Activated T-helper 2 cell treated with anti-CD3 and anti-CD28 coated beads, Interferon-gamma antibody, Interleukin-2, Interleukin-4, amounts not matched to agents 10 μg/mL and 5 μg/mL and 100 μg/mL, durations not matched to agents 14 hours and 24 hours and 36 hours (primary cell): ENCODE measurements at regions of chr3 and their contacts with region 1.

Region 1: GRCh38 chr3:58034738-58035523 is 26.7 kb downstream of the FLNB start:
- DNase-seq: peak; percentile 46
- H3K4me3 Mint-ChIP-seq: peak overlapping the region; percentile 51
- H3K27ac Mint-ChIP-seq: peak overlapping the region; percentile 84
- H3K4me1 Mint-ChIP-seq: peaks cover 42% of the 10 kb centered on the region
- H3K27me3 Mint-ChIP-seq: no peaks in the 10 kb centered on the region

Region 2: GRCh38 chr3:58022507-58022906 is 12.4 kb before region 1 on chr3:
- intact Hi-C with region 1: loop called (anchors 1 kb)
- DNase-seq: no peak
- H3K4me3 Mint-ChIP-seq: no peak overlapping the region
- H3K27ac Mint-ChIP-seq: peak overlapping the region; percentile 75
- H3K4me1 Mint-ChIP-seq: peaks cover 49% of the 10 kb centered on the region
- H3K27me3 Mint-ChIP-seq: no peaks in the 10 kb centered on the region

Region 3: DNA sequence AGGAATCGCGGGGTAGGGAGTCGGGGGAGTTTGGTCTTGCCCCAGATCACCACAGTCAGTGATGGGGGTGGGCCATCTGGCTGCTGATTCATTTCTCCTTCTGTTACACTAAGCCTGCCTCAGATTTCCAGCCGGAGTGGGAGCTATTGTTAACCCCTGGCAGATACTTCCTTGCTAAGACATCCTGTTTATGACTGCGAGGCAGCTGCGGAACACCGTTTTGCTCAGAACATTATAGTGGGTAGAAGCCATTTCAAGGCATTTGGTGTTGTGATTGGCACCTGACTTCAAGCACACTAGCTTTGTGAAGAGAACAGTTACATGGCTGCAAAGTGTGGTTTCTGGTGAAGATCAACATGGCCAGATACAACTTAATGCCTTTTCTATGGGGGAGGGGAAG is 47.1 kb after region 1 on chr3:
- intact Hi-C with region 1: loop called (anchors 1 kb)
- DNase-seq: peak; percentile 14
- H3K4me3 Mint-ChIP-seq: peak overlapping the region; percentile 50
- H3K27ac Mint-ChIP-seq: peak overlapping the region; percentile 75
- H3K4me1 Mint-ChIP-seq: peaks cover 39% of the 10 kb centered on the region
- H3K27me3 Mint-ChIP-seq: no peaks in the 10 kb centered on the region